Right ventricle myocardium inferior (tissue), 1 donor: ENCODE measurements at regions of chr2 and their contacts with region 1.

Region 1: DNA sequence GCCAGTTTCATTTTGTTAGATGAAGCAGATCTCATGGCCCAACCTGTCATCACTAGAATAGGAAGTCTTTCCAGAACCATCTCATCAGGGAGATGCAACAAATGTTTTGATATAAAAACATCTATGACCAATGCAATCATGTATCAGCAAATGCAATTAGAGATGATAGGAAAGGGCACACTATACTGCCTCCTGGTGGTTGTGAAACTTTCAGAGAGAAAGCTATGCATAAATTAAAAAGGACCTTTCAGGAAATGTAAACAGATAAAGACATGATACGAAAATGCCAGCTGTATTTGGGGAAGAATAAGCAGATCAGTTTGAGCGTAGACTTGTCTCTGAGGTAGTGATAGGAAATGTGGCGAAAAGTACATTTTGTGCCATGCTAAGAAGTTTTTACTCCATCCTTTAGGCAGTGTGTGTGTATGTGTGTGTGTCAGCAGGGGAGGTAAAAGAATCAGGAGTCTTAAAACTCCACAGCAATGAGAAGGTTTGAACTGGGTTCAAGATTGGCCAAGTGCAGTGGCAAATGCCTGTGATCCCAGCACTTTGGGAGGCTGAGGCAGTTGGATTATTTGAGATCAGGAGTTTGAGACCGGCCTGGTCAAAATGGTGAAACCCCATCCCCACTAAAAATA is 479.3 kb downstream of the CPS1 start:
- DNase-seq: no peak
- ATAC-seq: no peak

Region 2: GRCh38 chr2:210663631-210664089 is 372.0 kb before region 1 on chr2:
- intact Hi-C with region 1: loop called (anchors 5 kb)
- DNase-seq: no peak
- ATAC-seq: no peak

Region 3: DNA sequence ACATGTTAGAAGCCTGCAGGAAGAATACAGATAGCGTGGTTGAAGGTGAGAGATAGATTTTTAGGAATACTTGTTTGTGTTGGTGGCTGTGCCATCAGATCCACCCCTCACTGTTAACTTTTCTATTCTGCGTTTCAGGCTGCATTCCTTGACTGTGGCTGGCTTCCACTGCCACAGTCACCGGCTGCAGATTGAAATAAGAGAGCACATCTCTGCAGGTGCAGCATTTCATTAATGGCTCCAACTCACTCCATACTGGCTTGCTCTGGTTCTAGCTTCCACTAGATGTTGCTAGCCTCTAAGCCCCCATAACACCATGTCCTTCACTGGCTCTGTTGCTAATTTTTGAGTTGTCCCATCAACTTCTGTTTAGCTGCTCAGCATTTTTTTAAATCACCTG is 192.8 kb before region 1 on chr2:
- intact Hi-C with region 1: no loop called
- DNase-seq: no peak
- ATAC-seq: no peak

Region 4: DNA sequence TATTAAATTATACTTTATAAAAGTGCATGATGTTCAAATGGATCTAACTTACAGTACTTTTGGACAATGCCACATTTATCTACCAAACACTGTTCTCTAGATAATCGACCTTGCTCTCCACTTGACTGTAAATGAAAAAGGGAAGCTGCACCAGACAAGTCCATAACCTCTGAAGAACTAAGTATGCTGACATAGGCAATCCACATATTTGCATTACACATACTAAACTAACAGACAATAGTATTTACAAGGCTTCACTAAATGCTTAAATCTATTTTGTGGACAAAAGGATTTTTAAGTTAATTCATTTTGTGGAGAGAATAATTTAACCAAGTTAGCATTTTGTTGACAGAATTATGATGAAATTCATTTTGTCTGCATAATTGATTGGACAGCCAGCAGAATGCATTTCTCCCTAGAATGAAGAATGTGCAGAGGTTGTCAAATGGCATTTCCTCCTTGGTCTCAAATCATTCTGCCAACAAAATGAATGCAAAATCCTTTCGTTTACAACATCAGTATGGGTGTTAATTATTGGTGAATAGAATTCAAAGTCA is 41.6 kb after region 1 on chr2:
- intact Hi-C with region 1: no loop called
- DNase-seq: no peak
- ATAC-seq: no peak